MCF 10A (cell line): ENCODE measurements at regions of chr9 and their contacts with region 1.

Region 1: GRCh38 chr9:20870115-20870514 is 161.3 kb downstream of the HACD4 start:
- DNase-seq: no peak
- H3K4me3 Mint-ChIP-seq: no peak overlapping the region
- H3K27ac Mint-ChIP-seq: no peak overlapping the region
- H3K4me1 Mint-ChIP-seq: peaks cover 6% of the 10 kb centered on the region
- H3K27me3 Mint-ChIP-seq: no peaks in the 10 kb centered on the region
- CTCF ChIP-seq: no peak

Region 2: GRCh38 chr9:20884985-20885593 is 15.0 kb after region 1 on chr9:
- CTCF ChIA-PET with region 1: interaction called, 15 read pairs
- POLR2A ChIA-PET with region 1: no interaction called
- intact Hi-C with region 1: no loop called
- DNase-seq: peak; percentile 65
- H3K4me3 Mint-ChIP-seq: no peak overlapping the region
- H3K27ac Mint-ChIP-seq: no peak overlapping the region
- H3K4me1 Mint-ChIP-seq: no peaks in the 10 kb centered on the region
- H3K27me3 Mint-ChIP-seq: no peaks in the 10 kb centered on the region
- CTCF ChIP-seq: peak; percentile 48